Caco-2 (cell line): ENCODE measurements at regions of chr5 and their contacts with region 1.

Region 1: GRCh38 chr5:128825826-128826225 is 139.5 kb upstream of the SLC27A6 start:
- DNase-seq: no peak
- H3K4me3 ChIP-seq: no peak overlapping the region
- H3K4me3 Mint-ChIP-seq: no peak overlapping the region
- H3K27ac Mint-ChIP-seq: no peak overlapping the region
- H3K4me1 ChIP-seq: peaks cover 27% of the 10 kb centered on the region
- H3K4me1 Mint-ChIP-seq: peaks cover 7% of the 10 kb centered on the region
- H3K27me3 ChIP-seq: no peaks in the 10 kb centered on the region
- H3K27me3 Mint-ChIP-seq: no peaks in the 10 kb centered on the region
- CTCF ChIP-seq: no peak

Region 2: DNA sequence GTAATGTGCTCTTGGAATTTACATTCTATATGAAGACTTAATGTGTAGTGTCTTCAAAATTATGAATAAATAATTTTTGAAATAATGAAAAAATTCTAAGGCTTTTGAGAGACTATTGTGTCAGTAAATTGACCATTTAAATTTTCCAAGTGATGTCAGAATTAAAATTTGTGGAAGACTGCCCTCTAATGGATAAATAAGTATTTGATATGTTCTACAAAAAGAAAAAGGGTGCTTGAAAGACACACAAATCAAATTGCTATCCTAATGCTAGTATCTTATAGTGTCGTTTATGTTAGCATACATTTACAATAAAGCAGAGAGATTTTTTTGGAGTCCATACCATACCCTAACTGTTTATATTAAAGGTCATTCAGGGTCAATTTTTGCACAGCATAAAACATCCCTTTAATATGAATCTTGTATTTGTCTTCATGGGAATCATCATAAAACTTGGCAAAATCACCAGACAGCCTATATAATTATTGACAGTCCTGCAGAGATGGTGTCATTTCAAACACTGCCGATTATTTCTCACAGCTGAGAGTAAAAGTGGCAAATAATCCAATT is 18.6 kb after region 1 on chr5:
- CTCF ChIA-PET with region 1: no interaction called
- POLR2A ChIA-PET with region 1: no interaction called
- intact Hi-C with region 1: no loop called
- DNase-seq: no peak
- H3K4me3 ChIP-seq: no peak overlapping the region
- H3K4me3 Mint-ChIP-seq: no peak overlapping the region
- H3K27ac Mint-ChIP-seq: no peak overlapping the region
- H3K4me1 ChIP-seq: no peaks in the 10 kb centered on the region
- H3K4me1 Mint-ChIP-seq: no peaks in the 10 kb centered on the region
- H3K27me3 ChIP-seq: no peaks in the 10 kb centered on the region
- H3K27me3 Mint-ChIP-seq: no peaks in the 10 kb centered on the region
- CTCF ChIP-seq: peak in 1 of 2 experiments; percentile 29

Region 3: GRCh38 chr5:128854931-128855330 is 29.1 kb after region 1 on chr5:
- CTCF ChIA-PET with region 1: no interaction called
- POLR2A ChIA-PET with region 1: no interaction called
- intact Hi-C with region 1: loop called (anchors 1 kb)
- DNase-seq: peak; percentile 70 to 76
- H3K4me3 ChIP-seq: no peak overlapping the region
- H3K4me3 Mint-ChIP-seq: no peak overlapping the region
- H3K27ac Mint-ChIP-seq: peak overlapping the region; percentile 5
- H3K4me1 ChIP-seq: peaks cover 4% of the 10 kb centered on the region; the same call in 1 of the 2 replicates
- H3K4me1 Mint-ChIP-seq: peaks cover 10% of the 10 kb centered on the region
- H3K27me3 ChIP-seq: no peaks in the 10 kb centered on the region
- H3K27me3 Mint-ChIP-seq: no peaks in the 10 kb centered on the region
- CTCF ChIP-seq: no peak